ENCODE measurements at regions of chr20 and their contacts with region 1.

Region 1: GRCh38 chr20:21640561-21641182 is 64.8 kb upstream of the PAX1 start:
- DNase-seq: peak; percentile 54
- H3K4me3 ChIP-seq: no peak overlapping the region
- H3K27ac ChIP-seq: no peak overlapping the region
- H3K4me1 ChIP-seq: peaks cover 14% of the 10 kb centered on the region
- CTCF ChIP-seq: peak; percentile 73

Region 2: DNA sequence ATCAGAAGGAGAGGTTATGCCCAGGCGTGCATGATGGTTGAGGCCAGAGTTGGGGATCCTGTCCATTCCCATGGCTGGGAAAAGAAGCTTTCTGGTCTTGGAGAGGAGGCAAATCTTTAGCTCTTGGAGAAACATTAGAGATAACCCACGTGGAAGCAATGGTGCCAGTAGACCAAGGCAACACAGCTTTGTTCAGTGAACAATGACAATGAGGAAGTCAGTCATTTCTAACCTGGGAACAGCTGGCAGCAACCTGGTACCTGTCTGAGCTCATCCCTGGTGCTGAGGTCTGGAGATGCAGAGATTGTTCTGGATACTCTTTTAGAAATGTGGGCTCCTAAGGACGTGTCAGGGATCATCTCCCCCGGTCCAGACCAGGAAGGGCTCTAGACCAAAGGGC is 11.9 kb before region 1 on chr20:
- CTCF ChIA-PET with region 1: interaction called, 14 read pairs
- POLR2A ChIA-PET with region 1: interaction called, 11 read pairs
- intact Hi-C with region 1: loop called (anchors 1 kb)
- DNase-seq: peak; percentile 58
- H3K4me3 ChIP-seq: peak overlapping the region; percentile 28
- H3K27ac ChIP-seq: peak overlapping the region; percentile 64
- H3K4me1 ChIP-seq: peaks cover 64% of the 10 kb centered on the region
- CTCF ChIP-seq: no peak

Region 3: GRCh38 chr20:21693322-21693721 is 52.6 kb after region 1 on chr20:
- CTCF ChIA-PET with region 1: no interaction called
- POLR2A ChIA-PET with region 1: no interaction called
- intact Hi-C with region 1: loop called (anchors 2 kb)
- DNase-seq: peak; percentile 19
- H3K4me3 ChIP-seq: no peak overlapping the region
- H3K27ac ChIP-seq: no peak overlapping the region
- H3K4me1 ChIP-seq: no peaks in the 10 kb centered on the region
- CTCF ChIP-seq: peak; percentile 76

Region 4: GRCh38 chr20:21719592-21720214 is 79.0 kb after region 1 on chr20:
- CTCF ChIA-PET with region 1: no interaction called
- POLR2A ChIA-PET with region 1: interaction called, 4 read pairs
- intact Hi-C with region 1: loop called (anchors 5 kb)
- DNase-seq: peak; percentile 60
- H3K4me3 ChIP-seq: no peak overlapping the region
- H3K27ac ChIP-seq: no peak overlapping the region
- H3K4me1 ChIP-seq: no peaks in the 10 kb centered on the region
- CTCF ChIP-seq: peak; percentile 97

Region 5: GRCh38 chr20:22106308-22106938 is 465.8 kb after region 1 on chr20:
- CTCF ChIA-PET with region 1: interaction called, 9 read pairs
- POLR2A ChIA-PET with region 1: no interaction called
- intact Hi-C with region 1: loop called (anchors 2 kb)
- DNase-seq: peak; percentile 18
- H3K4me3 ChIP-seq: no peak overlapping the region
- H3K27ac ChIP-seq: no peak overlapping the region
- H3K4me1 ChIP-seq: no peaks in the 10 kb centered on the region
- CTCF ChIP-seq: peak; percentile 73

Region 6: DNA sequence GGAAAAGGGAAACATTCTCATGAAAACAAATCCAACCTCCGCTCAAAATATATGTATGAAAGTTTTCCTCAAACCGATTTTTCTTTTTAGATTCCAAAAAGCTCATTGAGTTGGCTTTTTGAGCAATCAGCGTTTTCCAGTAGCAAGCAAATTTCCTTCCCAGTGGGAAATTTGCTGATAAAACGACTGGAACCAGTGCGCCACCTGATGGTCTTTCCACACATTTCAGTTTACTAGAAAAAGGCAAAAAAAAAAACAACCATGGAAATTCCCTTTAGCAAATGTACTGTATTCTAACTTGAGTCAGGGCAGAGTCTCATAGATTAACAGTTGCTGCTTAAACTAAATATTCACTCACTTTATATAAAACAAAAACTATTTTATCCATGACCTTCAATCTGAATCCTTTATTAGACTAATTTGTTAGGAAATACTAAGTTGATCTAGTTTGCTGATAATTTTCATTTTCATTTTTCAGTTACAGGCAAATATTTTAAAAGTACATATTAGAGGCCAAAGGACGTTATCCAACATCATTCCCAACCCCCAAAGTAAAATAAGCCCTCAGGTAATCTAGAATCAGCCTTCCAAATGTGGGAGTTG is 672.2 kb after region 1 on chr20:
- CTCF ChIA-PET with region 1: no interaction called
- POLR2A ChIA-PET with region 1: no interaction called
- intact Hi-C with region 1: loop called (anchors 10 kb)
- DNase-seq: peak; percentile 7
- H3K4me3 ChIP-seq: no peak overlapping the region
- H3K27ac ChIP-seq: no peak overlapping the region
- H3K4me1 ChIP-seq: no peaks in the 10 kb centered on the region
- CTCF ChIP-seq: peak; percentile 82

Measured in OCI-LY7 (cell line).